Breast epithelium (tissue), 4 donors: ENCODE measurements at regions of chr1 and their contacts with region 1.

Region 1: DNA sequence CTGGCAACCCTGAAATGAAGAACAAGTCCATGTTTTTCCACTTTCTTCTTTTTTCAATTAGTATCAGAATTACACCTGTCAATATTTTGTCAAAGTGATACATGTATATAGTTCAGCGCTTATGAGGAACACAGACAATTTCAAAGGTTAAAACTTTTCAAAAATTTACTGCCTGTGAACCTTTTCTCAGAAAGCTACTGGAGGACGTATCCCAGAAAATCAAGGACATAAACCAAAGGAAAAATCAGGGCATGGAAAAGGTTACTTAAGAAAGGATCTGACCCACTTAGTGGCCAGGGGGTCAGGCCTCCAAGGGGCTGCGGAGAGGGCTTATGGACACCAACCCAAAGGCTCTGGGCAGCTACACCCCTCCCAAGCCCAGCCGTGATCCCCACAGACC is 81.1 kb upstream of the ACTRT2 start:
- DNase-seq: no peak
- H3K4me3 ChIP-seq: no peak overlapping the region
- H3K27ac ChIP-seq: no peak overlapping the region
- H3K4me1 ChIP-seq: no peaks in the 10 kb centered on the region
- H3K27me3 ChIP-seq: peaks cover 2 to 37% of the 10 kb centered on the region in 2 donors
- CTCF ChIP-seq: no peak
- POLR2A ChIP-seq: no peak

Region 2: DNA sequence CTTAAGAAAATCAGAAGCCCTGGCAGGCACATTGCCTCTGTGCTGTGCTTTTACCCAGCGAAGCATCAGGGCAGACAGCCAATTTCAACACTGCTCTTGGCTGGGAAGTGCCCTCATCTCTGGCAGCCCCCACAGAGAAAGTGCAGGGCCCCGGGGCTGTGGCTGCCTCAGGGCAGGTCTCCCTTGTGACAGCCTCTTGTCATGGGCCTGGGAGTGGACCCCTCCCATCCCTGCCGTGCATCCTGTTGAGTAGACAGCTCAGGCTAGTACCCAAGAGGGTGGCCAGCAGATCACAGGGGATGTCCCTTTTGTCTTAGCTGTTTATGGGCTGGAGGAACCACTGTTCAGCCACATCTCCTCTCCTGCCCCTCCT is 162.0 kb before region 1 on chr1:
- intact Hi-C with region 1: no loop called
- DNase-seq: no peak
- H3K4me3 ChIP-seq: no peak overlapping the region
- H3K27ac ChIP-seq: no peak overlapping the region
- H3K4me1 ChIP-seq: no peaks in the 10 kb centered on the region
- H3K27me3 ChIP-seq: peaks cover 0 to 4% of the 10 kb centered on the region in 2 donors
- CTCF ChIP-seq: no peak
- POLR2A ChIP-seq: no peak

Region 3: DNA sequence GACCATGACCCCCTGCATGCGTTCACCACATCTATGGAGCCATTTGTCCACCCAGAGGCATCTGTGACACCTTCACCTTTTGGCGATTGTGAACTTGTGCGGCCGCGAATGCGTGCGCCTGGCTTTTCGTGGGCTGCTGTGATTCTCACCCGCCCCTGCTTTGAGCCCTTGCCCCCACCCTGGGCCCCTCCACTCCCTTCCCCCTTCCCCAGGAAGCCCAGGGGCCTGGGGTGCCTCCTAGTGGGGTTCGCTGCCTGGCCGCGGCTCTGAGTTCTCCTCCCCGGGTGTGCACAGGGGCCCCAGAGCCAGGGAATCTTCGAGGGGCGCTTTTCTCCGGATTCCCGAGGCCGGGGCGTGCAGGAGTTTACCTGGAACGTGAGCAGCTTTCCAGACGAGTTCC is 16.8 kb before region 1 on chr1:
- intact Hi-C with region 1: loop called (anchors 1 kb)
- DNase-seq: no peak
- H3K4me3 ChIP-seq: no peak overlapping the region
- H3K27ac ChIP-seq: no peak overlapping the region
- H3K4me1 ChIP-seq: no peaks in the 10 kb centered on the region
- H3K27me3 ChIP-seq: peaks cover 0 to 70% of the 10 kb centered on the region in 2 donors
- CTCF ChIP-seq: no peak
- POLR2A ChIP-seq: no peak